ENCODE measurements at regions of chr4 and their contacts with region 1.

Region 1: GRCh38 chr4:77395481-77395880 is 210.1 kb upstream of the CXCL13 start:
- DNase-seq: no peak
- ATAC-seq: no peak
- H3K4me3 ChIP-seq: no peak overlapping the region
- H3K27ac ChIP-seq: no peak overlapping the region
- H3K4me1 ChIP-seq: no peaks in the 10 kb centered on the region
- H3K27me3 ChIP-seq: no peaks in the 10 kb centered on the region
- CTCF ChIP-seq: no peak
- EP300 ChIP-seq: no peak
- POLR2A ChIP-seq: no peak
- RAD21 ChIP-seq: no peak

Region 2: GRCh38 chr4:77347341-77347966 is 48.0 kb before region 1 on chr4:
- CTCF ChIA-PET with region 1: no interaction called
- POLR2A ChIA-PET with region 1: no interaction called
- RAD21 ChIA-PET with region 1: no interaction called
- SMC1A ChIA-PET with region 1: no interaction called
- in situ Hi-C with region 1: no loop called
- intact Hi-C with region 1: no loop called
- DNase-seq: no peak
- ATAC-seq: peak; percentile 72
- H3K4me3 ChIP-seq: no peak overlapping the region
- H3K27ac ChIP-seq: no peak overlapping the region
- H3K4me1 ChIP-seq: no peaks in the 10 kb centered on the region
- H3K27me3 ChIP-seq: no peaks in the 10 kb centered on the region
- CTCF ChIP-seq: no peak
- EP300 ChIP-seq: no peak
- POLR2A ChIP-seq: no peak
- RAD21 ChIP-seq: no peak

Region 3: DNA sequence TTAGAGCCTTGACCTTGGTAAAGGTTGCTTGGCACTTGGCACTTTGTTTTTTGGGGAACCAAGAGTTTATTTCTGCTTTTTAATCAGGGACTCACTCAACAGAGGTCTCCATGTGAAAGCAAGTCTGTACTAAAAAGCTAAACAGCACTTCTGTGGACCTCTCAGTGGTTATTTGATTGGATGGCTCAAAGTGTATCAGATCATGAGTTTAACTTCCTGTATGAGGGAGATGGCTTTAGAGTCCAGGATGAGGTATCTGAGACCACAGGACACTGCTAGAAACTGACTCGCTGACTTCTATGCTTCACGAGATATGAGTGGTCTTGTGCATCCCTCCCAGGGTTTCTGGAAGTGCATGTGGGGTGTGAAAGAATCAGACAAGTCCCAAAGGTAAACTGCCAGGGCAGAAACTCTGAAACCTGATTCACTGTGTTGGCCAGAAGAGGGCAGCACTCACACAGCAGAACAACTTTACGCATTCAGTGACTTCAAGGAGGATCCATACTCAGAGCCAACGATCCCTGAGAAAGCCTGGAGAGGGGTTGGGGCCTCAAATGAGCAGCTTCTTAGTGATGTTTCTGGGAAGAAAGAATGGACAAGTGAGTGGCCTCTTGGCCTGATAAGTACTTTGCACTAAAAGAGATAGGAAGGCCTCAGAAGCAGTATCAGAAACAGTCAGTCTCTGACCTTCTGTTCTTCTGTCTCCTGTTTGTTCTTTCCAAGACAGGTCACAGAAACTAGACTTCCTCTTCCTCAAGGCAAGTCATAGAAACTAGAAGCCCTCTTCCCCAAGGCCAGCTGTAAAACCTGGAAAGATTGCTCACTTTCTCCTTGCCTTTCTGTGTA is 10.1 kb before region 1 on chr4:
- CTCF ChIA-PET with region 1: interaction called, 10 read pairs
- POLR2A ChIA-PET with region 1: no interaction called
- RAD21 ChIA-PET with region 1: no interaction called
- SMC1A ChIA-PET with region 1: no interaction called
- in situ Hi-C with region 1: no loop called
- intact Hi-C with region 1: no loop called
- DNase-seq: peak; percentile 15
- ATAC-seq: peak; percentile 93
- H3K4me3 ChIP-seq: no peak overlapping the region
- H3K27ac ChIP-seq: no peak overlapping the region
- H3K4me1 ChIP-seq: no peaks in the 10 kb centered on the region
- H3K27me3 ChIP-seq: no peaks in the 10 kb centered on the region
- CTCF ChIP-seq: peak; percentile 84 to 85 (median 84)
- EP300 ChIP-seq: no peak
- POLR2A ChIP-seq: no peak
- RAD21 ChIP-seq: peak; percentile 89

Region 4: DNA sequence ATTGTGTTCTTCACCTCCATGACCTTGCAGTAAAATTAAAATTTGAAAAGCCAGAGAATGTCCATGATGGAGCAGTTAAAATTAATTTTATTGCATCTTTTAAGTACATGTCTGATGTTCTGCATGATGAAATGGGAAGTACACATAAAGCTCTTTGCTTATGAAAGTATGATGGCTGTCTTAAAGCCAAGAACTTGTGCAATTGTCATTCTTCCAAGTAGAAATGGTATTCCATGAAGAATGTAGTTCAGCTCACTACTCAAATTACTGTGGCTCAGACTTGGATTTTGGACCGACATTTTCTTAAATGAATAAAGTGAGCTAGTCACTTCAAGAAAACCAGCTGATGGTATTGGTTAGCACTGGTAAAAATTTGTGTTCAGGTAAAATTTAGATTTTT is 48.5 kb after region 1 on chr4:
- CTCF ChIA-PET with region 1: no interaction called
- POLR2A ChIA-PET with region 1: no interaction called
- RAD21 ChIA-PET with region 1: no interaction called
- SMC1A ChIA-PET with region 1: no interaction called
- in situ Hi-C with region 1: no loop called
- intact Hi-C with region 1: no loop called
- DNase-seq: no peak
- ATAC-seq: no peak
- H3K4me3 ChIP-seq: no peak overlapping the region
- H3K27ac ChIP-seq: no peak overlapping the region
- H3K4me1 ChIP-seq: no peaks in the 10 kb centered on the region
- H3K27me3 ChIP-seq: no peaks in the 10 kb centered on the region
- CTCF ChIP-seq: no peak
- EP300 ChIP-seq: no peak
- POLR2A ChIP-seq: no peak
- RAD21 ChIP-seq: no peak

Region 5: GRCh38 chr4:77618383-77619122 is 223.1 kb after region 1 on chr4:
- CTCF ChIA-PET with region 1: no interaction called
- POLR2A ChIA-PET with region 1: no interaction called
- RAD21 ChIA-PET with region 1: no interaction called
- SMC1A ChIA-PET with region 1: no interaction called
- in situ Hi-C with region 1: no loop called
- intact Hi-C with region 1: no loop called
- DNase-seq: no peak
- ATAC-seq: peak; percentile 99
- H3K4me3 ChIP-seq: no peak overlapping the region
- H3K27ac ChIP-seq: no peak overlapping the region
- H3K4me1 ChIP-seq: no peaks in the 10 kb centered on the region
- H3K27me3 ChIP-seq: peaks cover 0 to 3% of the 10 kb centered on the region in 2 experiments; a peak in 1 of 4 replicates
- CTCF ChIP-seq: peak; percentile 81 to 88 (median 85)
- EP300 ChIP-seq: no peak
- POLR2A ChIP-seq: no peak
- RAD21 ChIP-seq: peak; percentile 88

Region 6: DNA sequence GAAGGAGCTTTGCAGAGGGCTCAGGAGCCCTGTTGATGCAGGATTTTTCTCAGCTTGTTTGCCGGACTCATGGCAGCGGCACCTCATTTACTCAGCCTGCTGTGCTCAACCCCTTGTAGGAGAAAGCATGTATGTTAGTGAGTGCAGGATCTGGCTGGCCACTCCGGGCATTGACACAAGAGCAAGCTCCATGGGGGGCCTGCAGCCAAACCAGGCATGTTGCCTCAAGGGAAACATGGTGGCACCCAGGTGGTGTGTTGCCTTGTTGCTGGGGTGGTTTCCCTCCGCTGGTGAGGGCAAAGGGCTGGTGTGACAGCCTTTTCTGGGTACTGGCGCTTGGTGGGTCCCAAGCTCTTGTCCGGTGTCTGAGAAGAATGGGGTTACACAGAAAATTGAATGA is 966.8 kb after region 1 on chr4:
- CTCF ChIA-PET with region 1: no interaction called
- POLR2A ChIA-PET with region 1: no interaction called
- RAD21 ChIA-PET with region 1: no interaction called
- SMC1A ChIA-PET with region 1: no interaction called
- in situ Hi-C with region 1: no loop called
- intact Hi-C with region 1: no loop called
- DNase-seq: no peak
- ATAC-seq: no peak
- H3K4me3 ChIP-seq: no peak overlapping the region
- H3K27ac ChIP-seq: no peak overlapping the region
- H3K4me1 ChIP-seq: no peaks in the 10 kb centered on the region
- H3K27me3 ChIP-seq: no peaks in the 10 kb centered on the region; a peak in 1 of 4 replicates
- CTCF ChIP-seq: no peak
- EP300 ChIP-seq: no peak
- POLR2A ChIP-seq: no peak
- RAD21 ChIP-seq: no peak

Measured in GM12878 (cell line).